PC-3 (cell line): ENCODE measurements at regions of chrX and their contacts with region 1.

Region 1: DNA sequence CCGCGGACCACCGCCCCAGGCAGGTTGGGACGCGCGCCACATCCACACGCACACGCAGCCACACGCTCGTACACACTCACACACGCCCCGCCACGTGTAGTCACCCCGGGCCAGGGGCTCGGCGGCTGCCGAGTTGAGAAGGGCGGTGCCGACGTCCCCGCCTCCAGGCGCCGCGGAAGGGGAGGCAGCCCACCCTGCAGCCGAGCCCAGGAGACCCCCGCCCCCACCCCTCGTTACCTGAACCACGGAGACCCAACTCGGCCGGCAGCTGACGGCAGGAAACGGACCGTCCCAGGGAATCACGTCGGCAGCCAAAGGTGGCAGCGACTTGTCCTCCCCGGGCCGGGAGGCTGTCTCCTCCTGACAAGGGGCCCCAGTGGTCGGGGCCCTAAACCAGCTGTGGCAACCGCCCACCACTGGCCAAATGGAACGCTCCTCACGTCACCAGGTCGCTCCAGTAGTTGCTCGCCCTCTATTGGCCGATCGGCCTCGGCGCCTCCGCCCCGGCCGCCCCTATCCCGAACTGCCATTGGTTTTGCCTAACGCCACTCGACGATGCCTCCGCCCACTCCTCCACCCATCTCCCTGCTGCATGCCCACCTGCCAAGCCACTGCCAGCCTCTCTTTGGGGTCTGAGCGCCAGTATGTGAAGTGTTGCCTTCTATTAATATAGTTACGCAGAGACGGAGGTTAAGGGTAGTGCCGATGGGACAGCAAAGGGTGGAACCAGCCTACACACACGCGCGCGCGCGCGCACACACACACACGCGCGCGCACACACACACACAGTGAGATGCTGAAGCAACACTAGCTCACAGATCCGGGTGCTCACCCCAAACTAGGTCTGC is at the start of gene ZDHHC9:
- DNase-seq: peak; percentile 88
- ATAC-seq: peak; percentile 84
- H3K4me3 ChIP-seq: peak within 1 kb of the TSS; percentile 77
- H3K27ac ChIP-seq: peak within 1 kb of the TSS; percentile 40
- H3K4me1 ChIP-seq: peaks cover 26% of the 10 kb centered on the region
- H3K27me3 ChIP-seq: no peaks in the 10 kb centered on the region
- CTCF ChIP-seq: no peak
- total RNA-seq, gene ZDHHC9: 29.0 and 30.5 TPM in 2 replicates

Region 2: DNA sequence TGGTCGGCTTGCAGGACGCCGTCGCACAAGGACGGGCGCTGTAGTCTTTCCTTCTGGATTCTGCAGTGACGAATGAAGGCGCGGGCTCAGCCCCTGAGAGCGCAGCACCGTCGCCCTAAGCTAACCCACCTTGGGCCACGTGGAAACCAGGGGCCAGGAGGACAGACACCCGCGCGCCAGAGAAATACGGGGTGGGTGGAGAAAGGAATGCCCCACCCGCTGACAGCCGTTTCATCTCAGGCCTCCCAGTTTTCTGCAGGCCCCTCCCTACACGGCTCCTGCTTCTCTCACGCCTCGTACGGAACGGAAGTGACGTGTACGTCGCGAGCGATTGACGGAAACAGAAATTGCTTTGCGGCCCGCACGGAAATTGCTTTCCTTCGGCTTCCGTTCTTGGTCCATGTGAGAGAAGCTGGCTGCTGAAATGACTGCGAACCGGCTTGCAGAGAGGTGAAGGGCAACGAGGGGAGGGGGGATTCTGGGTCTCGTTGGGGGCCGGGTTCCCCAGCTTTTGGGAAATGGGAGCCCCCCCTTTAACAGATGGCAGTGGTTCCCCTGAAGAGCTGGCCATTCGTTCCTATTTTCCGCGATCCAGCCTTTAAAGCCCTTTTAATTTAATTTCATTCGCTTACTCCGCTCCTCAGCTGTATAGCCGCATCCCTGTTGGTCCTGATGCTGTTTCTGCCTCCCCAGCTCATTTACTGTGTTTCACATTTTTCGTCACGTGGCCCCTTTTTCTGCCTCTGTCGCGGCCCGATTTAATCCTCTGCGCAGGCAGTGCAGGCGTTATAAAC is 62.3 kb after region 1 on chrX and contains the start of gene UTP14A:
- CTCF ChIA-PET with region 1: no interaction called
- POLR2A ChIA-PET with region 1: no interaction called
- intact Hi-C with region 1: loop called (anchors 5 kb)
- DNase-seq: peak; percentile 94
- ATAC-seq: peak; percentile 96
- H3K4me3 ChIP-seq: peak within 1 kb of the TSS; percentile 98
- H3K27ac ChIP-seq: peak within 1 kb of the TSS; percentile 56
- H3K4me1 ChIP-seq: peaks cover 22% of the 10 kb centered on the region
- H3K27me3 ChIP-seq: no peaks in the 10 kb centered on the region
- CTCF ChIP-seq: no peak
- total RNA-seq, gene UTP14A: 20.2 and 40.5 TPM in 2 replicates